ENCODE measurements at regions of chr11 and their contacts with region 1.

Region 1: DNA sequence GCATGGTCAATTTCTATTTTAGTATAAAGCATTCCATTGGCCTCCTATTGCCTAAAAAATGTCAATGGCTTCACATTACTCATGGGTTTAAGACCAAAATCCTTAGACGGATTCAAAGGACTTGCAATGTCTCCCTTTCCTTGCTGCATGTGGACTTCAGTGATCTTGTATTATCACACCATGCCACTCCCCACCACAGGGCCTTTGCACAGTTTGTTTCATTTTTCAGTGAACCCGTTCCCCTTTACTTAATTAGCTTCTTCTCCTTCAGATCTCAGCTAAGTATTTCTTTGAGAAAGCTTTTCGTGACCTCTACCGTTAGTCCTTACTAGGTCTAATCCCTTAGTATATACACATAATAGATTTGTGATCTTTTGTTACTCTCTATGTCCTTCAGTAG is 269.7 kb downstream of the FAM76B start:
- DNase-seq: no peak
- H3K4me3 ChIP-seq: no peak overlapping the region
- H3K27ac ChIP-seq: no peak overlapping the region
- H3K4me1 ChIP-seq: no peaks in the 10 kb centered on the region
- H3K27me3 ChIP-seq: no peaks in the 10 kb centered on the region
- CTCF ChIP-seq: no peak
- POLR2A ChIP-seq: no peak

Region 2: DNA sequence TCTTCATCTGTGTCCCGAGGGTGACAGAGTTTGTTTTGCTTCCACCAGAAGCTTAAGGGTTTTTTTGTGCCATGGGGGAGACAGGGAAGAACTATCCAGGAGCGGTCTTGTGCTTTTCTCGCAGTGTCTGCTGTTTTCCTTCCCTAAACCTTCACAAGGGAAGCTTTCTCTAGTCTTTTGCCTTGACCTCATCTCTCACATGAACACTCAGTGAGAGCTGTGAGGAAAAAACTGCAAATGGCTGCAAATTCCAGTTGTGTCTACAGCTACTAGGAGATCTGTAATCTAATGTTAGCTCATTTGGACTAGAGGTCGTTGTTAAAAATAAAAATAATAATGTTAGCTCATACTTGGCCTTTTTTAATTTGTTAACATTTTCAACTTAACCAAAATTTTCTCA is 24.2 kb before region 1 on chr11:
- intact Hi-C with region 1: loop called (anchors 2 kb)
- DNase-seq: no peak
- H3K4me3 ChIP-seq: no peak overlapping the region
- H3K27ac ChIP-seq: peak overlapping the region in 1 of 2 donors; percentile 61
- H3K4me1 ChIP-seq: no peaks in the 10 kb centered on the region
- H3K27me3 ChIP-seq: no peaks in the 10 kb centered on the region
- CTCF ChIP-seq: no peak
- POLR2A ChIP-seq: no peak